ENCODE measurements at regions of chr6 and their contacts with region 1.

Region 1: DNA sequence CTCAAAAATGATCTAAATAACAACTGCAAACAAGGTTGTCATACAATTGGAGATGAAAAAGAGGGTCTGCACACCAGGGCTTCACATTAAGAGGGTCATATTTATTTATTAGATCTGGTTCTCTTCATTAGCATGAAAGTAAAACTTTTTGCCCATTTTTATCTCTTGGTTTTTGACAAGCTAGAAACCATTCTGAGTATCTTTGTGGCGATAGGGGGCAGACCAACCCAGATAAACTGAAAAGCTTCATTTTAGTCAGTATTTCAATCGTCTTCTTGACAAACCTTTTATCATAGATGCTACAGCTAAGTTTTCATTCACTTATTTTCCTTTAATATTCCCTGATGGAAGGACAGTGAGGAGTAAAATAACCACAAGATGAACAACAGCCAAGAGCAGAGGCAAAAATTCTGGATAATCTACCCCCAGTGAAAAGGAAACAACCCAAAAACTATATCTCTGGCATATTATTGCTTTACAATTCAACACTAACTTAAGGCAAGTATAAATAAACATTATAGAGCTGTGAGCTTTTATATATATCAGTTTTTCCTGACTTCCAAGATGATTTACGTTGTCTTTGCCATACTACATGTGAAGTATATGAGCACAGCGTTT is 45.2 kb downstream of the THEMIS start:
- DNase-seq: peak; percentile 50
- H3K4me3 Mint-ChIP-seq: no peak overlapping the region
- H3K27ac Mint-ChIP-seq: peak overlapping the region; percentile 12
- H3K4me1 Mint-ChIP-seq: peaks cover 35% of the 10 kb centered on the region
- H3K27me3 Mint-ChIP-seq: no peaks in the 10 kb centered on the region

Region 2: GRCh38 chr6:127737009-127737486 is 118.6 kb before region 1 on chr6:
- CTCF ChIA-PET with region 1: interaction called, 12 read pairs
- POLR2A ChIA-PET with region 1: no interaction called
- DNase-seq: peak; percentile 34
- H3K4me3 Mint-ChIP-seq: no peak overlapping the region
- H3K27ac Mint-ChIP-seq: no peak overlapping the region
- H3K4me1 Mint-ChIP-seq: no peaks in the 10 kb centered on the region
- H3K27me3 Mint-ChIP-seq: no peaks in the 10 kb centered on the region

Region 3: GRCh38 chr6:127907960-127908640 is 52.4 kb after region 1 on chr6:
- CTCF ChIA-PET with region 1: interaction called, 11 read pairs
- POLR2A ChIA-PET with region 1: interaction called, 4 read pairs
- DNase-seq: no peak
- H3K4me3 Mint-ChIP-seq: peak overlapping the region; percentile 77
- H3K27ac Mint-ChIP-seq: peak overlapping the region; percentile 81
- H3K4me1 Mint-ChIP-seq: peaks cover 40% of the 10 kb centered on the region
- H3K27me3 Mint-ChIP-seq: no peaks in the 10 kb centered on the region

Region 4: GRCh38 chr6:128327890-128328289 is 472.2 kb after region 1 on chr6:
- CTCF ChIA-PET with region 1: interaction called, 26 read pairs
- POLR2A ChIA-PET with region 1: interaction called, 7 read pairs
- DNase-seq: peak; percentile 31
- H3K4me3 Mint-ChIP-seq: no peak overlapping the region
- H3K27ac Mint-ChIP-seq: no peak overlapping the region
- H3K4me1 Mint-ChIP-seq: no peaks in the 10 kb centered on the region
- H3K27me3 Mint-ChIP-seq: no peaks in the 10 kb centered on the region

Measured in activated CD4-positive, alpha-beta memory T cell treated with anti-CD3 and anti-CD28 coated beads, Interleukin-2, amount 10 ng/mL, durations not matched to agents 7 days and 5 days (primary cell).